Activated naive CD4-positive, alpha-beta T cell treated with anti-CD3 and anti-CD28 coated beads, Interleukin-2, amount 10 ng/mL, durations not matched to agents 7 days and 5 days (primary cell): ENCODE measurements at regions of chr5 and their contacts with region 1.

Region 1: GRCh38 chr5:126776497-126777256 is at the start of gene LMNB1:
- DNase-seq: peak; percentile 96
- H3K4me3 Mint-ChIP-seq: peak within 1 kb of the TSS; percentile 96
- H3K27ac Mint-ChIP-seq: peak within 1 kb of the TSS; percentile 99
- H3K4me1 Mint-ChIP-seq: peaks cover 39% of the 10 kb centered on the region
- H3K27me3 Mint-ChIP-seq: no peaks in the 10 kb centered on the region

Region 2: DNA sequence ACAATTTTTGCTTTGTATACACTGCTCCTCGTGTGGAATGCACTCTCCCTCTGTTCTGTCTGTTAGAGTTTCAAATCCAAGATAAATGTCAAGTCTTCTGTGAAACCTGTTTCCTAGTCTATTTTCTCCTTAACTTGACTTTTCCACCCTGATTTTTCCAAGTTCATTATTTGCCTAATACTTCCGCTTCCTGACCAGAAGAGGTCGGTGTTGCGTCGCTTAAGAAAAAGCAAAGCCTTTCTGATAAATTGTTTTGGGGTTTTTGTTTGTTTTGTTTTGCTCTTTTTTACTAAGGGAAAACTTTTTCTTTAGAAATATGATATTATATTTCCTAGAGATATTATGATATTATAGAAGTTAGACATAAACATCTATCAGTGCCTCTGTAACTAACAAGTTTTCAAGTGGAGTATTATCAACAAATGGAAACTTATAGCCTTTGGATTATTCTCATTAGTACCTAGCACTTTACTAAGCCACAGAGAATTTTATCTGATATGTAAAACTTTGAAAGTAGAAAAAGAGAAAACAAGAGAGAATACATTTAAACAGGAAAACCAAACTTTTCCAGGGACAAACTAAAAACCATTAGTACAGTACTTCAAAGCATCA is 120.2 kb before region 1 on chr5:
- CTCF ChIA-PET with region 1: interaction called, 11 read pairs
- DNase-seq: peak; percentile 45
- H3K4me3 Mint-ChIP-seq: no peak overlapping the region
- H3K27ac Mint-ChIP-seq: no peak overlapping the region
- H3K4me1 Mint-ChIP-seq: peaks cover 7% of the 10 kb centered on the region
- H3K27me3 Mint-ChIP-seq: peaks cover 8% of the 10 kb centered on the region

Region 3: DNA sequence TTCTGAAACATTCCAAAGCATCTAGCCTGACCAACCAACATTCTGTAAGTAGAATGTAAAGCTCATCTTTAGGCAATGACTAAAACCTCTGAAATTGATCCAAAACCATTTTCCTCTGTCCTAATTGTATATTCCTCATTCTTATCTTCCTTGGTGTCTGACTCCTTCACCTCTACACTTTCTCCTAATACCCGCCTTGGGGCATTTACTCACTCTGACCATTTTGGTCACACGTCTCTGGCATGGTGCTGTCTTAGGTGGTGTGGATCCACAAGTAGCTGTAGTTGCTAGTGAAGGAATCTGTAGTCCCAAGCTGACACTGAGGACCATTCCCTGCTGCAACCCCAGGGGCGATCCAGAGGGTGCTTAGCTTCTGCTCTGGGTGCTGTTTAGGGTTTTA is 40.5 kb before region 1 on chr5:
- CTCF ChIA-PET with region 1: interaction called, 30 read pairs
- DNase-seq: no peak
- H3K4me3 Mint-ChIP-seq: no peak overlapping the region
- H3K27ac Mint-ChIP-seq: no peak overlapping the region
- H3K4me1 Mint-ChIP-seq: peaks cover 14% of the 10 kb centered on the region
- H3K27me3 Mint-ChIP-seq: peaks cover 12% of the 10 kb centered on the region

Region 4: DNA sequence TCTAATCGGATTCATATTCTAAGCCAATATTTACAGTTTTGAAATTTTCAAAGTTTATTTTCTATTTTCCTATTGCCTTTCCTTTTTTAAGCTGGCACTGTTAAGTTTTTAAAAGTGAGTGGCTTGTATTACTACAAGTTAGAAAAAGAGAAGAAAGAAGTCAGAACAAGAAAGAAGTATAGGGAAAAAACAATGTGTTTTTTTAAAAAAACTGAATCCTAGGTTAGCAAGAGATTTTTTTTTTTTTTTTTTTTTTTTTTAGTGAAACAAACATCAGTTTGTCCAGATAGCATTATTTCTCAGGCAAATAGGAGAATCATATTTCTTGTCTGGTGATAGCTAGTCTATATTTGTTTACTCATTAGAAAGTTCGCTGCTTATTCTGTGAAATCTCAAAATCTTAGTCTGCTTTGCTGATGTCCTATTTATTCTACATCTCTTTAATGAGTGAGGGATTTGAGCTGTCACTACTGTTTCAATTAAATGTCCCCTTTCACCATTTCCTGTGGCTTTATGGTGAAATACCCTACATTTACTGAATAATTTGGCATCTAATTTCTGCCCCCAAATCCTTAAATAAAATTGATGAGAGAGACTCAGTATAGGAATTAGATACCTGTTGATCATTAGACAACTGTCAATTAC is 18.8 kb before region 1 on chr5:
- CTCF ChIA-PET with region 1: interaction called, 10 read pairs
- DNase-seq: no peak
- H3K4me3 Mint-ChIP-seq: peak overlapping the region; percentile 43
- H3K27ac Mint-ChIP-seq: peak overlapping the region; percentile 85
- H3K4me1 Mint-ChIP-seq: peaks cover 61% of the 10 kb centered on the region
- H3K27me3 Mint-ChIP-seq: no peaks in the 10 kb centered on the region

Region 5: DNA sequence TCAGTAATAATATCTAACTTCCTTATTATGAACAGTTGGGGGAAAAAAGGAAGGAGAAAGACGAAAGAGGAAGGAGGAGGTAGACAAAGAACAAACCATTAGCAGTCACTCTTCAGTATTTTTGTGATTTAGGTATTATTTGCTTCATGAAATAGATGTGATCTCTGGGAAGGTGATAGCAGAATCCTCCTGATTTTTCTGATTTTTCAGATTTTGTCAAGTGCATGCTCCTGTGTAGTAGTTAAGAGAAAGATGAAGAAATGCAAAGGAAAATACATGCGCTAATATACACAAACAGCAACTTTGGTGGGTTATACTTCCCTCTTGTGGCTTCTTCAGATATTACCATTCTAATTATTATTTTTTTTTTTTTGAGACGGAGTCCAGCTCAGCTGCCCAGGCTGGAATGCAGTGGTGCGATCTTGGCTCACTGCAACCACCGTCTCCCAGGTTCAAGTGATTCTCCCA is 31.9 kb after region 1 on chr5:
- CTCF ChIA-PET with region 1: interaction called, 38 read pairs
- DNase-seq: no peak
- H3K4me3 Mint-ChIP-seq: no peak overlapping the region
- H3K27ac Mint-ChIP-seq: peak overlapping the region; percentile 22
- H3K4me1 Mint-ChIP-seq: peaks cover 43% of the 10 kb centered on the region
- H3K27me3 Mint-ChIP-seq: no peaks in the 10 kb centered on the region

Region 6: GRCh38 chr5:126947146-126948010 is 170.7 kb after region 1 on chr5:
- CTCF ChIA-PET with region 1: no interaction called
- DNase-seq: no peak
- H3K4me3 Mint-ChIP-seq: no peak overlapping the region
- H3K27ac Mint-ChIP-seq: no peak overlapping the region
- H3K4me1 Mint-ChIP-seq: no peaks in the 10 kb centered on the region
- H3K27me3 Mint-ChIP-seq: no peaks in the 10 kb centered on the region